PC-9 (cell line): ENCODE measurements at regions of chr4 and their contacts with region 1.

Region 1: DNA sequence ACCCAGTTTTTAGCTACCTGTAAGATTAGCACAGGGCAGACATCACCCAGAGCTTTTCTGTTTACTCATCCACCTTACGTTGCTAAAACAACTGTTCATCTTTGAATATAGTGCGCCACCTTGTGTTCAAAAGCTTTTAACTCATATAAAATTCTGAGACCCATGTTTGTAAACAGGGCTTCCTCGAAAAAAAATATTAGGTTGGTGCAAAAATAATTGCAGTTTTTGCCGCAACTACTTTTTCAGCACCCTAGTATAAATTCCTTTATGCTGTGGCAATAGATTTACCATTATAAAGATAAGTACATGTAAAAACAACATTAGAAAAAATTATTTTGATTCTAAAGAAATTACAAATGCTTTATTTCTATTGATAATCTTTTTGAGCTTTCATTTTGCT is 147.9 kb downstream of the LRBA start:
- DNase-seq: peak; percentile 5 to 59
- H3K4me3 ChIP-seq: no peak overlapping the region
- H3K27ac ChIP-seq: no peak overlapping the region
- H3K4me1 ChIP-seq: no peaks in the 10 kb centered on the region
- H3K27me3 ChIP-seq: no peaks in the 10 kb centered on the region
- CTCF ChIP-seq: peak; percentile 75

Region 2: GRCh38 chr4:149897783-149898182 is 969.4 kb before region 1 on chr4:
- CTCF ChIA-PET with region 1: no interaction called
- POLR2A ChIA-PET with region 1: no interaction called
- intact Hi-C with region 1: loop called (anchors 10 kb)
- DNase-seq: no peak
- H3K4me3 ChIP-seq: no peak overlapping the region
- H3K27ac ChIP-seq: no peak overlapping the region
- H3K4me1 ChIP-seq: no peaks in the 10 kb centered on the region
- H3K27me3 ChIP-seq: no peaks in the 10 kb centered on the region
- CTCF ChIP-seq: peak; percentile 54

Region 3: GRCh38 chr4:149980941-149981340 is 886.2 kb before region 1 on chr4:
- CTCF ChIA-PET with region 1: no interaction called
- POLR2A ChIA-PET with region 1: no interaction called
- intact Hi-C with region 1: loop called (anchors 5 kb)
- DNase-seq: peak; percentile 40 to 41
- H3K4me3 ChIP-seq: no peak overlapping the region
- H3K27ac ChIP-seq: no peak overlapping the region
- H3K4me1 ChIP-seq: no peaks in the 10 kb centered on the region
- H3K27me3 ChIP-seq: no peaks in the 10 kb centered on the region
- CTCF ChIP-seq: peak; percentile 66

Region 4: GRCh38 chr4:149999485-150000074 is 867.6 kb before region 1 on chr4:
- CTCF ChIA-PET with region 1: no interaction called
- POLR2A ChIA-PET with region 1: no interaction called
- intact Hi-C with region 1: loop called (anchors 1 kb)
- DNase-seq: no peak
- H3K4me3 ChIP-seq: no peak overlapping the region
- H3K27ac ChIP-seq: no peak overlapping the region
- H3K4me1 ChIP-seq: peaks cover 8% of the 10 kb centered on the region; the same call in 1 of the 2 replicates
- H3K27me3 ChIP-seq: no peaks in the 10 kb centered on the region
- CTCF ChIP-seq: peak; percentile 68

Region 5: DNA sequence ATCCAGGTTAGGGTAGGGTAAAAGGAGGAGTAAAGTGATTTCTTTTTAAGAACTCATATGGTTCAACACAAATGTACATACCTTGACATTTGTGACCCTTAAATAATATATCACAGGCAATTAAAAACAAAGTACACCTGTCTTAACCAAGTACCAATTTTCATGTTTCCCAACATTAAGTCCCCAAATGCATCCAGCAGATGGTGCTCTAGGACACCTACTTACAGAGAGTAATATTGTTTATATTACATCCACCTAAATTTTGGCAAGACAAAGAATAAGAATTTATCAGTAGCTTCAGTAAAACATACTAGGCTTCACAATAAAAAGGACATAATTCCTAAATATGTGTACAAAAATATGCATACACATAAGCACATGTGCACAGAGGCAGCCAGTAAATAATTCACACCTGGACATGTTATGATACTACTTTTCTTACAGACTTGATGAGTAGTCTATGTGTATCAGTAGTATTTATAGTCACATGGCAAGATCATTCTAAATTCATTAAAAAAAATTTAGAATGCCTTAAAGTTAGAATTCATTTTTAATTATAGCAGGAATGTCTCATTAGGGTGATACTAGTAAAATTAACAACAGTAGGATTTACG is 569.2 kb before region 1 on chr4:
- CTCF ChIA-PET with region 1: interaction called, 10 read pairs
- POLR2A ChIA-PET with region 1: no interaction called
- intact Hi-C with region 1: loop called (anchors 1 kb)
- DNase-seq: peak in 1 of 2 experiments; percentile 20
- H3K4me3 ChIP-seq: no peak overlapping the region
- H3K27ac ChIP-seq: no peak overlapping the region
- H3K4me1 ChIP-seq: no peaks in the 10 kb centered on the region
- H3K27me3 ChIP-seq: no peaks in the 10 kb centered on the region
- CTCF ChIP-seq: peak; percentile 66

Region 6: GRCh38 chr4:150725957-150726523 is 141.1 kb before region 1 on chr4:
- CTCF ChIA-PET with region 1: interaction called, 12 read pairs
- POLR2A ChIA-PET with region 1: no interaction called
- intact Hi-C with region 1: no loop called
- DNase-seq: no peak
- H3K4me3 ChIP-seq: no peak overlapping the region
- H3K27ac ChIP-seq: no peak overlapping the region
- H3K4me1 ChIP-seq: no peaks in the 10 kb centered on the region
- H3K27me3 ChIP-seq: no peaks in the 10 kb centered on the region
- CTCF ChIP-seq: no peak

Region 7: GRCh38 chr4:150789864-150790263 is 77.3 kb before region 1 on chr4:
- CTCF ChIA-PET with region 1: no interaction called
- POLR2A ChIA-PET with region 1: no interaction called
- intact Hi-C with region 1: no loop called
- DNase-seq: no peak
- H3K4me3 ChIP-seq: no peak overlapping the region
- H3K27ac ChIP-seq: no peak overlapping the region
- H3K4me1 ChIP-seq: no peaks in the 10 kb centered on the region
- H3K27me3 ChIP-seq: no peaks in the 10 kb centered on the region
- CTCF ChIP-seq: no peak

Region 8: DNA sequence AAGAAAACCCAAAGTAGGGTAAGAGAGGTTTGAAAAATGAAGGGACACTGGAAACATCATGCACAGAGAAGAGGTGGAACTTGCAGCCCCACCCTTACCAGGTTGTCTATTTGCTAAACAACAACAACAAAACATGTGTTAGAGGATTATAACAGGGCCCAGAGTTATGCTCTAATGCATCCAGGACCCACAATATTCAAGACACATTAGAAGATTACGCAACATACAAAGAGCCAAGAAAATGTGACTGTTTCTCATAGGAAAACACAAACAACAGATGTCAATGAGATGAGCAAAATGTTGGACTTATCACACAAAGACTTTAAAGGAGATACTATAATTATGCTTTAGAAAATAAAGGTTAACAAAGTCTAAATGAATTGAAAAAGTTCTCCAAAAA is 19.5 kb after region 1 on chr4:
- CTCF ChIA-PET with region 1: interaction called, 10 read pairs
- POLR2A ChIA-PET with region 1: no interaction called
- intact Hi-C with region 1: no loop called
- DNase-seq: no peak
- H3K4me3 ChIP-seq: no peak overlapping the region
- H3K27ac ChIP-seq: no peak overlapping the region
- H3K4me1 ChIP-seq: 0 out of 2 replicates have a peak, but pooled peaks cover 5% of the 10 kb centered on the region
- H3K27me3 ChIP-seq: no peaks in the 10 kb centered on the region
- CTCF ChIP-seq: no peak